AG04450 (cell line): ENCODE measurements at regions of chr5 and their contacts with region 1.

Region 1: DNA sequence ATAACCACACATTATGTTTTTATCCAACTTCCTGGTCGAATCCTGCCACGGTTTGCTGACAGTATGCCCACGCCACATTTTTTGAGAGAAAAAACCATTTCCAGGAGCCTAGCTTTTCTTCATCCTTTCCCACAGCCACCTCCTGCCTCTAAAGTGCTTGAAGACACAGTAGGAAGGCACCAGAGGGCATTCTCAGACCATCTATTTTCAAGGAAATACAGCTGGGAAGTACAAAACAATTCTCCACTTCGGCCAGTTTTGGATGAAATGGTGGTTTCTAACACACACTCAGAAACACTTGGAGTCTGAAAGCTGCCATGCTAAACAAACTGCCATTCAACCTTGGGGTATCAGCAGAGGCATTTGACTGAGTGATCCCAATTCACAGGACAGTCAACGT is 86.3 kb upstream of the RPS23 start:
- DNase-seq: no peak
- H3K4me3 ChIP-seq: no peak overlapping the region
- H3K27ac ChIP-seq: no peak overlapping the region
- H3K27me3 ChIP-seq: no peaks in the 10 kb centered on the region
- CTCF ChIP-seq: peak; percentile 59

Region 2: GRCh38 chr5:82158755-82159413 is 205.6 kb before region 1 on chr5:
- CTCF ChIA-PET with region 1: no interaction called
- POLR2A ChIA-PET with region 1: no interaction called
- DNase-seq: no peak
- H3K4me3 ChIP-seq: no peak overlapping the region
- H3K27ac ChIP-seq: no peak overlapping the region
- H3K27me3 ChIP-seq: no peaks in the 10 kb centered on the region
- CTCF ChIP-seq: no peak

Region 3: GRCh38 chr5:82312373-82312856 is 52.1 kb before region 1 on chr5:
- CTCF ChIA-PET with region 1: interaction called, 12 read pairs
- POLR2A ChIA-PET with region 1: no interaction called
- DNase-seq: peak; percentile 69
- H3K4me3 ChIP-seq: no peak overlapping the region
- H3K27ac ChIP-seq: no peak overlapping the region
- H3K27me3 ChIP-seq: no peaks in the 10 kb centered on the region
- CTCF ChIP-seq: peak; percentile 98

Region 4: GRCh38 chr5:82338771-82339373 is 25.6 kb before region 1 on chr5:
- CTCF ChIA-PET with region 1: no interaction called
- POLR2A ChIA-PET with region 1: no interaction called
- DNase-seq: no peak
- H3K4me3 ChIP-seq: no peak overlapping the region
- H3K27ac ChIP-seq: no peak overlapping the region
- H3K27me3 ChIP-seq: no peaks in the 10 kb centered on the region
- CTCF ChIP-seq: no peak

Region 5: GRCh38 chr5:82641331-82642003 is 277.0 kb after region 1 on chr5:
- CTCF ChIA-PET with region 1: interaction called, 10 read pairs
- POLR2A ChIA-PET with region 1: no interaction called
- DNase-seq: peak; percentile 65
- H3K4me3 ChIP-seq: no peak overlapping the region
- H3K27ac ChIP-seq: no peak overlapping the region
- H3K27me3 ChIP-seq: no peaks in the 10 kb centered on the region
- CTCF ChIP-seq: peak; percentile 76